ENCODE measurements at regions of chr1 and their contacts with region 1.

Region 1: DNA sequence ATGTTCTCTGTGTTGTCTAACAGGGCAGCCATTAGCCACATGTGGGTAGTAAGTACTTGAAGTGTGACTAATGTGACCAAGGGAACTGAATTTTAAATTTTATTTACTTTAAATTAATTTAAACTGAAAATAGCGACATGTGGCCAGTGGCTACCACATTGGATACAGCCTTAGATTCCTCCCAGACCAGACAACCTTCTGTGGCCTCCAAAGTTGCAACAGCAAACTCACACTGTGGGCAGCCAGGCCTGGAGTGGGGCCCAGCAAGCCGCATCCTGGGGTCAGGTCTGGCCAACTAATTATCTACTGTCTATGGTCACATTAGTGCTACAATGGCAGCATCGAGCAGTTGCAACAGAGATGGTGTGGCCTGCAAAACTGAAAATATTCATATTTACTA is 11.7 kb downstream of the EIF2D start:
- DNase-seq: no peak
- H3K4me3 ChIP-seq: no peak overlapping the region
- H3K27ac ChIP-seq: no peak overlapping the region
- H3K4me1 ChIP-seq: no peaks in the 10 kb centered on the region
- H3K27me3 ChIP-seq: no peaks in the 10 kb centered on the region
- CTCF ChIP-seq: no peak
- EP300 ChIP-seq: no peak
- POLR2A ChIP-seq: no peak
- RAD21 ChIP-seq: no peak

Region 2: DNA sequence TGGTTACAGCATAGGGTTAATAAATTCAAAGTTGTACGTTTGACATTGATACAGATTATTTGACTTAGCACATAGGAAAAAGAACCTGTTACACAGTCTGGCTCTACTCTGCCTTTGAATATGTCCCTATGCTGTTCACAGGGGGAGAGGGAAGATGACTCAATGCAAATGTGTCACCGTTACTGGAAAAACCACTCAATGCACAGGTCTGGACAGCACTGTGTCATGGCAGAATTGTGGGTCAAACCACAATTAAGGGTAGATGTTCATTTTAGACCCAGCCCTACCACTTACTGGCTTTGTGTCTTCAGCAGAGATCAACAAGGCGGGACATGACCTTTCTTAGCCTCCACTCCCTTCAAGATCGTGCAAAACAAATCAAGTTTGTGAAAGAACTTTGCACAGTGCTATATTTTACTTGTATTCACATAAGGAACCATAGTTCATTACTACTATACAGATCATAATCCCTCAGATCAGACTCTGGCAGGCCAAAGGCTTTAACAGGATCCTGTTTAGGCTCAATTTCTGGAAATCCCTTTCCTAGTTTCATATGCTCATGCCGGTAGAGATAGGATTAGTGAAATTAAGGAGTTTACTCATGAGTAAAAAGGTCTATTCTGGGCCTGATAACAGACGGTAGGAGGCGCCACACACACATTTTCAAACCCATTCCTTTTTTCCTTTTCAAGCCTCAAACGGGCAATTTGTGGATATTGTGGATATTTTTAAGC is 10.3 kb before region 1 on chr1:
- CTCF ChIA-PET with region 1: interaction called, 21 read pairs
- POLR2A ChIA-PET with region 1: interaction called, 3 read pairs
- DNase-seq: no peak
- H3K4me3 ChIP-seq: no peak overlapping the region
- H3K27ac ChIP-seq: no peak overlapping the region
- H3K4me1 ChIP-seq: no peaks in the 10 kb centered on the region
- H3K27me3 ChIP-seq: no peaks in the 10 kb centered on the region
- CTCF ChIP-seq: peak in 2 of 3 experiments; percentile 49 to 69; a peak in 3 of 4 replicates
- EP300 ChIP-seq: no peak
- POLR2A ChIP-seq: no peak
- RAD21 ChIP-seq: peak; percentile 40 to 54; a peak in 3 of 4 replicates